Activated CD4-positive, alpha-beta T cell treated with anti-CD3 and anti-CD28 coated beads, Interleukin-2, amount 10 ng/mL, durations not matched to agents 24 days and 14 days (primary cell): ENCODE measurements at regions of chr5 and their contacts with region 1.

Region 1: DNA sequence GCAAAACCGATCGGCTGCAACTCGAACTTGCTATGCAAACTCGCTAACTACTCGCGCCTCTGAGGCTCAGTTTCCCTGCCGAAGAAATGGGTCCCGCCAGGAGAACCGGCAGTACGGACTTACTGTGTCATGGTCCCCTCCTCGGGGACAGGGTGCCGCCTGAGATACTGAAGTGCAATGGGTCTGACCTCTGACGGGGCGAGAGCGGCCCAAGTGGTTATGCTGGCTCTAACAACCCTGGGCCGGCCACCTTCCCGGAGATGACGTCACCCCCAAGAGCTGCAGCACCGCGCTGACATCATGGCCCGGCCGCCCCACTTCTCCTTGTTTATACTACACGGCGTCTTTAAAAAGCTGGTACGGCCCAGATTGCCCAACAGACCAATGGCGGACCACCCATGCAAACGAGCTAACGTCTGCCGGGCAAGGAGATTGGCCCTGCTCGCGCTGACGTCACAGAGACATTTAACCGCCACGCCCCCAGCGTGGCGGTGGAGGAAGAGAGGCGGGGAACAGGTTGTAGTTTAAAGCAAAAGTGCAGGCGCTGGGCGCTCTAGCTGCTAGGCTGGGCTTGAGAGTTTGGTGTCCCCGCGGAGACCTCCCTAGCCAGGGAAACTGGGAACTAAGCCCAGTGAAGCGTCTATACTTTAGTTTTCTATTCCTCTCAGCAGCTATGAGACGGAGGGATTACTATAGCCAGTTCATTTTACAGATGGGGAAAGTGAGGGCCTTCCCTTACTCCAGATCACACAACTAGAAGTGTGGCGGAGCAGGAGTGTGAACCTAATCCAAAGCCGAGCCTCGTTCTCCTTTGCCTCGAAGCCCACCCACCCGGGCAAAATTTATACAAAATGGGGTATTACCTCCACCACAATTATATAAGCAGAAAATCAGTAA is 654 bp upstream of the RNF44 start:
- DNase-seq: peak; percentile 99
- H3K4me3 Mint-ChIP-seq: peak overlapping the region; percentile 93
- H3K27ac Mint-ChIP-seq: peak overlapping the region; percentile 95
- H3K4me1 Mint-ChIP-seq: peaks cover 72% of the 10 kb centered on the region
- H3K27me3 Mint-ChIP-seq: no peaks in the 10 kb centered on the region

Region 2: GRCh38 chr5:175657593-175658271 is 880.1 kb before region 1 on chr5 and contains the start of gene HRH2:
- intact Hi-C with region 1: loop called (anchors 2 kb)
- DNase-seq: peak; percentile 90
- H3K4me3 Mint-ChIP-seq: peak within 1 kb of the TSS; percentile 100
- H3K27ac Mint-ChIP-seq: peak within 1 kb of the TSS; percentile 98
- H3K4me1 Mint-ChIP-seq: peaks cover 77% of the 10 kb centered on the region
- H3K27me3 Mint-ChIP-seq: peaks cover 2% of the 10 kb centered on the region
- total RNA-seq, gene HRH2: 67.3 and 70.4 TPM in 2 replicates

Region 3: GRCh38 chr5:176388444-176389134 is 149.3 kb before region 1 on chr5 and contains the starts of genes HIGD2A and NOP16:
- intact Hi-C with region 1: loop called (anchors 1 kb)
- DNase-seq: peak; percentile 99
- H3K4me3 Mint-ChIP-seq: peak within 1 kb of the TSS; percentile 98
- H3K27ac Mint-ChIP-seq: peak within 1 kb of the TSS; percentile 100
- H3K4me1 Mint-ChIP-seq: peaks cover 25% of the 10 kb centered on the region
- H3K27me3 Mint-ChIP-seq: no peaks in the 10 kb centered on the region
- total RNA-seq, gene HIGD2A: 96.4 and 104 TPM in 2 replicates
- total RNA-seq, gene NOP16: 109 and 114 TPM in 2 replicates

Region 4: DNA sequence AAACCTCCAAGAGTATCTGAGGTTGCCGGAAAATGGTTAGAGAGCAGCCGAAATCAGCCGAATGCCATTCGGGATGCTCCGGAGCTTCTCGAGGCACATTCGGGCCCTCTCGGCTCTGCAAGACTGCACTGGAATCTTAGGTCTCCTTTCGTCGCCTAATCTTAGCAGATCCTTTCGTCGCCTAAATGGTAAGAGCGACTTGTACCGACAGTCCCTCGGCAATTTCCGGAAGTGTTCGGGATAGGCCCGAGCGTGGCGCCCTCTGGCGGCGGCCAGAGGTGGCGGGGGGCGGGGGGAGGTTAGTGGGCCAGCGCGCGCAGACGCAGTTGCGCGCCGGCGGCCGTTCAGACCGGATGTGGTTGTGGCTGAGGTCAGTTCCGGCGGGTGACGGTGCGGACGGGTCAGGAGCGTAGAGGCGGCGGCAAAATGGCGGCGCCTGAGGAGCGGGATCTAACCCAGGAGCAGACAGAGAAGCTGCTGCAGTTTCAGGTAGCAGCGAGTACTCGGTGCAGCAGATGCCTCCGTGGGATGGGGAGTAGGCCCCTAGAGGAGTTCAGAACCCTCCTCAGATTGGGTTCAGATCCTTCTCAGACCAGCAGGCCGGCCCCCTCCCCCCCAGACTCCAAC is 89.8 kb before region 1 on chr5 and contains the start of gene FAF2:
- intact Hi-C with region 1: loop called (anchors 1 kb)
- DNase-seq: peak; percentile 100
- H3K4me3 Mint-ChIP-seq: peak within 1 kb of the TSS; percentile 93
- H3K27ac Mint-ChIP-seq: peak within 1 kb of the TSS; percentile 94
- H3K4me1 Mint-ChIP-seq: peaks cover 30% of the 10 kb centered on the region
- H3K27me3 Mint-ChIP-seq: peaks cover 2% of the 10 kb centered on the region
- total RNA-seq, gene FAF2: 42.8 and 43.9 TPM in 2 replicates

Region 5: GRCh38 chr5:176559683-176560082 is 21.8 kb after region 1 on chr5:
- intact Hi-C with region 1: no loop called
- DNase-seq: no peak
- H3K4me3 Mint-ChIP-seq: no peak overlapping the region
- H3K27ac Mint-ChIP-seq: no peak overlapping the region
- H3K4me1 Mint-ChIP-seq: peaks cover 33% of the 10 kb centered on the region
- H3K27me3 Mint-ChIP-seq: peaks cover 3% of the 10 kb centered on the region

Region 6: GRCh38 chr5:176609724-176610434 is 72.0 kb after region 1 on chr5 and contains the start of gene GPRIN1:
- intact Hi-C with region 1: loop called (anchors 5 kb)
- DNase-seq: peak; percentile 93
- H3K4me3 Mint-ChIP-seq: peak within 1 kb of the TSS; percentile 88
- H3K27ac Mint-ChIP-seq: peak within 1 kb of the TSS; percentile 84
- H3K4me1 Mint-ChIP-seq: peaks cover 14% of the 10 kb centered on the region
- H3K27me3 Mint-ChIP-seq: peaks cover 38% of the 10 kb centered on the region
- total RNA-seq, gene GPRIN1: 3.7 TPM in 2 replicates

Region 7: DNA sequence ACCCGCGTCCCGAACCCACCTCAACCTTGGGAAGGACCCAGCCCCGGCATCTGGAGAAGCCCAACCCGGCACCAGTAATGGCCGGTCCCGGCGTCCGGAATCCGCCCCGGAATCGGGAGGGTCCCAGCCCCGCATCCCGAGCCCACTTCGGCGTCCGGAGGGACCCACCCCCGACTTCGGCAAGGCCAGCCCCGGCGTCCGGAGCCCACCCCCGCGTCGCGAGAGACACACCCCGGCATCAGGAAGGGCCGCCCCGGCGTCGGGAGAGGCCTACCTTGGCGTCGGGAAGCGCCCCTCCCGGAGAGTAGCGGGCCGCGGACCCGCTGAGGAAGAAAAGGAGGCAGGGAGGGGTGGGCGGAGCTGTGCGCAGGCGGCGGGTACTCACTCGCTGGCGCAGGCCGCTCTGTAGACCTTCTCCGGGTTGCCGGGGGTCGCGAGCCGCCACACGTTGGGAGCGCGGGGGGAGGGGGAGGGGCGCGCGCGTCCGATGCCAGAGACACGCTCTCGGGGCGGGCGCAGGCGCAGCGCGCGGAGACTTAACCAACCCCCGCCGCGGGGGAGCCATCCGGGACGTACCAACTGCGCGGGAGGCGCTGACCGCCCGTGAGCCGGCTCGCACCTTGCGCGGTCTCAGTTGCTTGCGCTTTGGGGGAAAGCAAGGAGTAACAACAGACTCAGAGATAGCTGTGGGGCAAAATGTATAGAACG is 468.6 kb after region 1 on chr5 and contains the start of gene UIMC1:
- intact Hi-C with region 1: loop called (anchors 5 kb)
- DNase-seq: peak; percentile 98
- H3K4me3 Mint-ChIP-seq: peak within 1 kb of the TSS; percentile 96
- H3K27ac Mint-ChIP-seq: peak within 1 kb of the TSS; percentile 92
- H3K4me1 Mint-ChIP-seq: peaks cover 16% of the 10 kb centered on the region
- H3K27me3 Mint-ChIP-seq: no peaks in the 10 kb centered on the region
- total RNA-seq, gene UIMC1: 65.2 and 68.5 TPM in 2 replicates

Region 8: DNA sequence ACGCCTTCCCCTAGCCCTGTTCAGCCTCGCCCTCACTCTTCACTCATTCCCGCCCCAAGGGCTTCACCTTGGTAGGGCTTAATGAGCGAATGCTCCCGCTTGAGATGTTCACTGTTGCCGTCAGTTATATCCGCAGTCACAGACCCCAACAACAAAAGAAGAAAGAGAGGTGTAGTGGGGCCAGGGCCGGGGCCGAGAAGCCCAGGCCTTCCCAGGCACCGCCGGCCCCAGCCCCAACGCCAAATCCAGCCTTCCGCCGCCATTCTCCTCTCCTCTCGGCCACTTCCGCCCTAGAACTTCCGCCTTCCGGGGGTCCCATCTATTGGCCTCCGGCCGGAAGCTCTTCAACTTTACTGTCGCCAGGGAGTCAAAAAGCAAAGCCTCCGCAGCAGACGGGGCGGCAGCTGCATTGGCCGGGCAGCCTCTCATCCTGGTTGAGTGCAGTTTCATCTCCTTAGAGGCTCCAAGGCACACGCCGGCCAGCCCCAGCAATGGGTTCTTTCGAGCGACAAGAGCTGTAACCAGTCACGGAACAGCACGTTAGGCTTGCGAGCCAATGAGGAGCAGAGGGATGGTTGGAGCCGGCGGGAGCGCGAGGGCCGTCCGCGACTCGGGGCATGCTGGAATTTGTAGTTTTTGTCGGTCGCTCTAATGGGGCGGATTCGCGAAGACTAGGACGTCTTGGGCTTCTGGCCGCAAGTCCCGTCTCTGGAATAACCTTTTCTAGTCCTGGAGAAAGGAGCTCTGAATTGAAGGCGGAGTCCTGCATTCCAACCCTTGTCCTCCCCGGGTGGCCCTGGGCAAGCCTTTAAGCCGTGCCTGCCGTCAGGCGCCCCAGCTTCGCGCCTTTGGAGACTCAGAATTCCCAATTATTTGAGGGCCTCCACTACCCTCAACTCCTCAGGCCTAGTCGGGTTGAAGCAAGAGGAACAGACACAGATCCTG is 813.8 kb after region 1 on chr5 and contains the start of gene LMAN2:
- intact Hi-C with region 1: loop called (anchors 10 kb)
- DNase-seq: peak; percentile 97
- H3K4me3 Mint-ChIP-seq: peak within 1 kb of the TSS; percentile 90
- H3K27ac Mint-ChIP-seq: peak within 1 kb of the TSS; percentile 100
- H3K4me1 Mint-ChIP-seq: peaks cover 48% of the 10 kb centered on the region
- H3K27me3 Mint-ChIP-seq: no peaks in the 10 kb centered on the region
- total RNA-seq, gene LMAN2: 105 and 108 TPM in 2 replicates